ENCODE measurements at regions of chr14 and their contacts with region 1.

Region 1: DNA sequence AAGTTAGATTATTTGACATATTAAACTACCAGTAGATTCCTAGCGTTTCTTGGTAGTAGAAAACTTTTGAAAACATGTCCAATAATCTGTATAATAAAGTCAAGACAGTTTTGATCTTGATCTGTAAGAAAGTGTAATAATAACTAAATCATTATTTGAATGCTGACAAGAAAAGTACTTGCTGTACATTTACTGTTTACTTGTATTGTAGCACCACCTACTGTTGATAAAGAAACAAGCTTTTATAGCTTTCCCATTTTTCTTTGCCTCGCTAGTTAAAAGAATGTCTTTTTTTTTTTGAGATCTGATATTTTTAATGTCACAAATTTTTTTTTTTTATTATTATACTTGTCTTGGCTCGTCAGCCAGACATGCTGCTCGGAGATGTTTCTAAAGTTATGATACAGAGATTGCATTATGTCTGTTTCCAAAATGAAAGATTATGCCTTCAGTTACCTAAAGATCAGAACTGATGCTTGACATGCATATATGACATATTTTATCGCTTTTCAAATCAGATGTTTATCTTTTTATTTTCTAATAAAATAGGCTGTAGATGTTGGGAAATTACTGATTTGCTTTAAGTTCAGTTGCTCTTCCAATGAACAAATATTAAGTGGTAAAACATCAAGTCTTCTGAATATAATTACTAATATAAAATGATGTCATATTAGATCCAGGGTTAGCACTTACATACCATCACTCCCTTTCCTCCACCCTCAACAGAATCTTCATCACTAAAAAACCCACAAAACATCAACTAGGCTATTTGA is 140.5 kb downstream of the AKAP6 start:
- DNase-seq: peak; percentile 5 to 29 (median 8)
- ATAC-seq: no peak
- H3K4me3 ChIP-seq: no peak overlapping the region
- H3K27ac ChIP-seq: no peak overlapping the region
- H3K4me1 ChIP-seq: no peaks in the 10 kb centered on the region
- H3K27me3 ChIP-seq: peaks cover 0 to 5% of the 10 kb centered on the region in 2 experiments; a peak in 2 of 5 replicates
- CTCF ChIP-seq: peak in 1 of 3 experiments; percentile 63; a peak in 2 of 6 replicates
- EP300 ChIP-seq: no peak
- POLR2A ChIP-seq: no peak
- RAD21 ChIP-seq: peak; percentile 68 to 72

Region 2: DNA sequence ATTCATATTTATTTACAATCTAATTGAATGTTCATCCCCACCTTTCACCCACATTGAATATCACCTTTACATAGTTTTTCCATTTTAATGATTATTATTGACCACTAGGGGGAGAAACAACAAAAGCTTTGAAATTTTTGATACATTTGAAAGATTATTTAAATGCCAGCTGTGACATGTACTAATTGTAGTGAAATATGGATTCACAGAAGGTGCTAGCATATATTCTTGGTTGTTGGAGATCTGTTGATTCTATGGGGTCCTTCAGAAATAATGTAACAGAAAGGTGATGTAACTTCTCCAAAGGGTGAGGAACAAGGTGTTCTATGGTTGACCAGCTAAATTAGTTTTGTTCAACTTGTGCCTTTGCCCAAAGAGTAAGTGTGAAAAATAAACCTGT is 959.4 kb before region 1 on chr14:
- CTCF ChIA-PET with region 1: interaction called, 4 read pairs
- POLR2A ChIA-PET with region 1: no interaction called
- in situ Hi-C with region 1: loop called (anchors 10 kb)
- intact Hi-C with region 1: no loop called
- DNase-seq: peak; percentile 9 to 21 (median 14)
- ATAC-seq: no peak
- H3K4me3 ChIP-seq: no peak overlapping the region
- H3K27ac ChIP-seq: no peak overlapping the region
- H3K4me1 ChIP-seq: no peaks in the 10 kb centered on the region
- H3K27me3 ChIP-seq: no peaks in the 10 kb centered on the region; a peak in 1 of 5 replicates
- CTCF ChIP-seq: peak in 2 of 3 experiments; percentile 9 to 49; a peak in 3 of 6 replicates
- EP300 ChIP-seq: no peak
- POLR2A ChIP-seq: no peak
- RAD21 ChIP-seq: peak; percentile 41 to 70; a peak in 3 of 4 replicates

Region 3: DNA sequence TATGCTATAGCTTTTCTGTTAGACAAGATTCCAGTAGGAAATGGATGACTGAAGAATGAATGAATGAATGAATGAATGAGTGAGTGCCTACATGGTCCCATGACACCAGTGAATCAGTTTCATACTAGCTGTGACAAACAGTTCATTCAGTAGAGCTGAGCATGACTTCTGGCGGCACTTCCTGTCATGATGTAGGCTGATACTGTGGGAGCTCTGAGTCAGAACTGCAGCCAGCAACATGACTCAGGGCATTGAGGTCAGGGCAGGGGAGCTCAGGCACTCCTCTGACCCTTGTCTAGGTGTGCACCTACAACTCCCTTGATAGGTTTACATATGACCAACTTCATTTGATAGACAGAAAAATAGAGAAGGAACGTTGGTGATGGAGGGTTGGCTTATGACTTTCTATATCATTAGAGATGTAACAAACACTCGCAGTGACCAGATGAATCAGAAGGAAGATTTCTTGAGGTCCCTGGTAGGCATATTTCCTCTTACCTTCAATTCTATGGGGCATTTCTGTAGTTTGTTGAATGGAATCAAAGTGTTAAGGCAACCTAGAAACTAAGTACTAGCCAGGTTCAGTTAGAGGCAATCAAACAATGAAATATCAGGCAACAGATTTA is 531.7 kb before region 1 on chr14:
- CTCF ChIA-PET with region 1: no interaction called
- POLR2A ChIA-PET with region 1: no interaction called
- in situ Hi-C with region 1: no loop called
- intact Hi-C with region 1: loop called (anchors 10 kb)
- DNase-seq: peak; percentile 36 to 79 (median 48)
- ATAC-seq: peak; percentile 98
- H3K4me3 ChIP-seq: no peak overlapping the region
- H3K27ac ChIP-seq: peak overlapping the region; percentile 76
- H3K4me1 ChIP-seq: peaks cover 0 to 3% of the 10 kb centered on the region in 2 experiments; a peak in 4 of 5 replicates
- H3K27me3 ChIP-seq: no peaks in the 10 kb centered on the region
- CTCF ChIP-seq: no peak
- EP300 ChIP-seq: peak; percentile 56; the same call in 1 of the 2 replicates
- POLR2A ChIP-seq: no peak
- RAD21 ChIP-seq: peak in 1 of 2 experiments; percentile 17; a peak in 2 of 4 replicates

Region 4: DNA sequence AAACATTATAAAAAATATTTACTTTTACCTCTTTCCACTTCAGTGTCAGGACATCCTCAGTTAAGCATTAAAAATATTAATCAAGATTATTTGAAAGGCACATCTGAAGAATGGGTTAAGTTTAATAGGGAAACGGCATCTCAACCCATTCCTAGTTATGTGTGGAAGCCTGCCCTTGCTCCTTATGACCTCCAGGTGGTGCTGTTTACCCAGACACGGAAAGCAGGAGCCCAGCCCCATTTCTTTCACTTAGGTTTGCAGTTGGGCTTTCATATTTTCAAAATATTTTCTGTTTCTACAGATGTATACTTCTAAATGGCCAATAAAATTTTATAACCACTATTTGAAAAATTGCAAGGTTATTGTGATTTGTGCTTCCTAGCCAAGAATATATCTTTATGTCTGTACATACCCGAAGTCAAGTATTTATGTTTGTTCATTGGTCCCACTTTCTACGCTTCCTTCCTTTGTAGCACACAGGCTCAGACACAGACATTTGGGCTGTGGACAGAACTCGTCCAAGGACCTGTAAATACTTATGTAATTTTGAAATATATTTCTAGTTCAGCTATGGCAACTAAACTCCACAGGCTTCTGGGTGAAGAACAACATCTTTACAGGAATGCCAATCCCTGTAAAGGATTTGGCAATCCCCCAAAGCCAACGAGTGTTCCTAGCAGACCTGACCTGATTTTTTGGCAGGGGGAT is 106.7 kb after region 1 on chr14:
- CTCF ChIA-PET with region 1: no interaction called
- POLR2A ChIA-PET with region 1: no interaction called
- in situ Hi-C with region 1: no loop called
- intact Hi-C with region 1: no loop called
- DNase-seq: peak; percentile 37 to 49 (median 48)
- ATAC-seq: peak; percentile 80
- H3K4me3 ChIP-seq: no peak overlapping the region
- H3K27ac ChIP-seq: no peak overlapping the region
- H3K4me1 ChIP-seq: no peaks in the 10 kb centered on the region
- H3K27me3 ChIP-seq: no peaks in the 10 kb centered on the region
- CTCF ChIP-seq: peak; percentile 60 to 81 (median 68)
- EP300 ChIP-seq: no peak
- POLR2A ChIP-seq: no peak
- RAD21 ChIP-seq: peak; percentile 74 to 79